Activated B cell treated with CpG ODN at 0.5 μM for 24 hours (primary cell): ENCODE measurements at regions of chr1 and their contacts with region 1.

Region 1: DNA sequence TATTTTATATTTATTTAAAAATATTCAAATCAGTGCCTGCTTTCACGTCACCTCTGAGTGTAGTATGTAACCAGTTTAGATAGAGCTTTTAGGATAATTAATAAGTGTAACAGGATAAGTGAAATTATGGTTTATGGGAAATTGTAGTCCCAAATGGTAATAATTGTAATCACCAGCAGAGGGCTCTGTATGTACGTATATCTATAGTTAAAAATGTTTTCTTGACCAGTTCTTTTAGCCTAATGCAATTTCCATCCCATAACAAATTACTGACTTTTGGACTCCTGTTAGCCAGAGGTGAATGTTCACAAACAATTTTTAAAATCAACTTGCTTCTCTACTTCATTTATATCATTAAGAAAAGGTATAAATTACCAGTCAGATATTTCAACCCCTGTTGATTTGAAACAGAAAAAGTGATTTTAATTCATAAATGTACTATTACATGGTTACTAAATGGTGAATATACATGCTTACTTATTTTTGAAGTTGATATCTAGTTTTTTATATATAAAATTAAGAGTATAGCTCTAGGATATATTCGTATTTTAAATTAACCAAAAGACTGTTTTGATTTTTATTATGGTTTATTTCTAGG is 25.3 kb downstream of the SLC30A7 start:
- DNase-seq: no peak
- ATAC-seq: no peak
- H3K4me3 Mint-ChIP-seq: no peak overlapping the region
- H3K27ac Mint-ChIP-seq: no peak overlapping the region
- H3K4me1 Mint-ChIP-seq: peaks cover 24% of the 10 kb centered on the region
- H3K27me3 Mint-ChIP-seq: no peaks in the 10 kb centered on the region
- CTCF ChIP-seq: peak; percentile 98

Region 2: GRCh38 chr1:100955322-100955721 is 34.1 kb after region 1 on chr1:
- CTCF ChIA-PET with region 1: no interaction called
- POLR2A ChIA-PET with region 1: no interaction called
- intact Hi-C with region 1: no loop called
- DNase-seq: no peak
- ATAC-seq: no peak
- H3K4me3 Mint-ChIP-seq: no peak overlapping the region
- H3K27ac Mint-ChIP-seq: no peak overlapping the region
- H3K4me1 Mint-ChIP-seq: peaks cover 26% of the 10 kb centered on the region
- H3K27me3 Mint-ChIP-seq: no peaks in the 10 kb centered on the region
- CTCF ChIP-seq: no peak

Region 3: DNA sequence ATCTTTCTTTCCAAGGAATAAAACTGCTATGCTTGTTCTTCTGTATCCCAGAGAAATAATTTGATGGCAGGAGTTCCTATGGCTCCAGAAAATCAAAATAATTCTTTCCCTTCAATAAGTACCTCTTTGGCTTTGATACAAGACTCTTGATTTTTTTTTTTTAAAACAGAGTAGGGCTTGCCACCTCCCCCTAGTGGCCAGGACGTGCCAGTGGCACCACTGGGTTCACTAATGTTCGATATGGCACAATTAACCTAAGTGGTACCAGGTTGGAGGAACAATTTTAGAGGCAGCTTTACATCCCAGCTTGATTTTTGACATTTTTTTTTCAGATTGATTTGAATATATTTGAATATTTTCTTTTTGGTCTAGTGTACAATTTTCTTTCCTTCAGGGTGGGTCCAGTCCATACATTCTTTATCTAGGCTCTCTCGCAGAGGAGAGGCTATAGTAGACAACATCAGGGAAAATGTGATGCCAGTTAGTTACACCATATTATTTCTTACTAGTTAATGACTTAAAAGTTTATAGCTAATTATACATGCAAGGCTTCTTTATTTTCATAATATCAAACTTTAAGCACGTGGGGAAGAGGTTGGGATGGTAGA is 646.5 kb after region 1 on chr1:
- CTCF ChIA-PET with region 1: no interaction called
- POLR2A ChIA-PET with region 1: no interaction called
- intact Hi-C with region 1: loop called (anchors 2 kb)
- DNase-seq: peak; percentile 17
- ATAC-seq: peak; percentile 76
- H3K4me3 Mint-ChIP-seq: no peak overlapping the region
- H3K27ac Mint-ChIP-seq: no peak overlapping the region
- H3K4me1 Mint-ChIP-seq: no peaks in the 10 kb centered on the region
- H3K27me3 Mint-ChIP-seq: peaks cover 14% of the 10 kb centered on the region
- CTCF ChIP-seq: peak; percentile 99